ENCODE measurements at regions of chr1 and their contacts with region 1.

Region 1: GRCh38 chr1:26695356-26696118 is at the start of gene ARID1A:
- DNase-seq: peak; percentile 95
- ATAC-seq: peak; percentile 57
- H3K4me3 Mint-ChIP-seq: peak within 1 kb of the TSS; percentile 87
- H3K27ac Mint-ChIP-seq: peak within 1 kb of the TSS; percentile 98
- H3K4me1 Mint-ChIP-seq: peaks cover 22% of the 10 kb centered on the region
- H3K27me3 Mint-ChIP-seq: no peaks in the 10 kb centered on the region
- CTCF ChIP-seq: no peak
- total RNA-seq, gene ARID1A: 82.4 to 84.9 TPM

Region 2: GRCh38 chr1:26233903-26234643 is 461.5 kb before region 1 on chr1 and contains the start of gene CEP85:
- CTCF ChIA-PET with region 1: no interaction called
- POLR2A ChIA-PET with region 1: no interaction called
- intact Hi-C with region 1: no loop called
- DNase-seq: peak; percentile 99
- ATAC-seq: peak; percentile 94
- H3K4me3 Mint-ChIP-seq: peak within 1 kb of the TSS; percentile 98
- H3K27ac Mint-ChIP-seq: peak within 1 kb of the TSS; percentile 92
- H3K4me1 Mint-ChIP-seq: peaks cover 27% of the 10 kb centered on the region
- H3K27me3 Mint-ChIP-seq: no peaks in the 10 kb centered on the region
- CTCF ChIP-seq: peak; percentile 26
- total RNA-seq, gene CEP85: 32.8 to 33.7 TPM

Region 3: DNA sequence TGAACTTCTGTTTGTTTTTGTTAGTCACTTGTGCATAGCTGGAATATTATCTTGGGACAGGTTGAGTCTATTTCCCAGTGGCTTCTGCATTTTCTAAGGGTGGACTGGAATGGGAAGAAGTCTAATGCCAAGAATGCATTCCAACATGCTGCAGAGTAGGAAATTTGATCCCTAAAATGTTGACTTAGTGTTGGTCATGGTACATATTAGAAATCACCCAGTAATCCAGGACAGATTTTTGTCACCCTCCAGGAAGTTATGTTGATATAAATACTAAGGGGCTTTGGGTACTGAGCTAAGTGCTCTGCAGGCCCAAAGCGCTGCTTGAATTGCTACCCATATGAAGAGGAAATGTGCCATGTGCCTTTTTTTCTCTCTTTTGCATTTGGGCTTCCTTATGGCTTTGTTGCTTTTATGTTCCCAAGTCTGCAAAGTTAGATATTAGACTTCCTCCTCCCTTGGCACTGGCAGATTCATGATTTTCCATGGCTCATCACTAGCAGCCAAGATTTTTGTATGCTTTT is 10.3 kb after region 1 on chr1:
- CTCF ChIA-PET with region 1: interaction called, 14 read pairs
- POLR2A ChIA-PET with region 1: interaction called, 46 read pairs
- intact Hi-C with region 1: no loop called
- DNase-seq: no peak
- ATAC-seq: no peak
- H3K4me3 Mint-ChIP-seq: peak overlapping the region; percentile 62
- H3K27ac Mint-ChIP-seq: peak overlapping the region; percentile 85
- H3K4me1 Mint-ChIP-seq: peaks cover 38% of the 10 kb centered on the region
- H3K27me3 Mint-ChIP-seq: no peaks in the 10 kb centered on the region
- CTCF ChIP-seq: no peak

Region 4: DNA sequence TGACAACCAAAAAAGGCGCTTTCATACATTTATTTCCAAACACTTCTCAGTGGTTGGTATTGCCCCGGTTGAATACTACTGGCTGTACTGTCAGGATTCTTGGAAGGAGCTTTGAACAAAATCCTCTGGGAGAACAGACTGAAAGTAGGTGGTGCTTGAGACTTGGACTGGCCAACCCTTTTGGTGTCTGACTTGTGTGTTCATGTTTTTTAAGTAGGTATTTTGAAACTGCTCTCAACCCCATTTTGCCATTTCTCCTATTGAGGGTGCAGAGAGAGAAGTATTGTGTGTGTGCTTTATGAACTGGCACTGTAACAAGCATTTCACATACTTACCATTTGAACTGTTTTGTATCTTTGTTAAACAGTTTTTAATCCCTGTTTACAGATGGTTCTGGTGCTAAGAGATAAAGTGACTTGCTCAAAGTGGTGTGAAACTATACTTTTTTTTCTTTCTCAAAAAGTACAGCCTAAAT is 21.5 kb after region 1 on chr1:
- CTCF ChIA-PET with region 1: no interaction called
- POLR2A ChIA-PET with region 1: interaction called, 123 read pairs
- intact Hi-C with region 1: no loop called
- DNase-seq: no peak
- ATAC-seq: no peak
- H3K4me3 Mint-ChIP-seq: no peak overlapping the region
- H3K27ac Mint-ChIP-seq: peak overlapping the region; percentile 6
- H3K4me1 Mint-ChIP-seq: peaks cover 86% of the 10 kb centered on the region
- H3K27me3 Mint-ChIP-seq: no peaks in the 10 kb centered on the region
- CTCF ChIP-seq: no peak

Region 5: GRCh38 chr1:26728645-26729044 is 33.1 kb after region 1 on chr1:
- CTCF ChIA-PET with region 1: interaction called, 16 read pairs
- POLR2A ChIA-PET with region 1: interaction called, 123 read pairs
- intact Hi-C with region 1: no loop called
- DNase-seq: no peak
- ATAC-seq: no peak
- H3K4me3 Mint-ChIP-seq: no peak overlapping the region
- H3K27ac Mint-ChIP-seq: peak overlapping the region; percentile 72
- H3K4me1 Mint-ChIP-seq: peaks cover 94% of the 10 kb centered on the region
- H3K27me3 Mint-ChIP-seq: no peaks in the 10 kb centered on the region
- CTCF ChIP-seq: no peak

Region 6: DNA sequence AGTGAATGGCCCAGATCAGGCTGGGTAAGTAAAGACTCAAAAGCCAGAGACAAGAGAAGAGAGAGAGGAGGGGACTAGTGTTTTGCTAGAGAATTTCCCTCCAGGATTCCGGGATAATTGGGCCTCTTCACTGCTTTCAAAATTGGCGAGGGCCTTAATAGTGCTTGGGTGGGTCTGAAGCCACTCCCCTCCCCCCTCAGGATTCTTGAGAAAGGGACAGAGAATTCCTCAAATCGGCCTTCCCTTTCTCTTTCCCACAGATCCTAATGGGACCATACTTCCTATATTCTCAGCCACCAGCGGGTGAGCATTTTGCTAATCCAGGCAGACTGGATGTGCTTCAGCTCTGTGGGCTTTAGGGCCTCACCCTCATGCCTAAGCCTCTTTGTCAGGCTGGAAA is 179.4 kb after region 1 on chr1:
- CTCF ChIA-PET with region 1: no interaction called
- POLR2A ChIA-PET with region 1: no interaction called
- intact Hi-C with region 1: no loop called
- DNase-seq: no peak
- ATAC-seq: no peak
- H3K4me3 Mint-ChIP-seq: no peak overlapping the region
- H3K27ac Mint-ChIP-seq: no peak overlapping the region
- H3K4me1 Mint-ChIP-seq: peaks cover 2% of the 10 kb centered on the region
- H3K27me3 Mint-ChIP-seq: no peaks in the 10 kb centered on the region
- CTCF ChIP-seq: no peak